ENCODE measurements at regions of chr4 and their contacts with region 1.

Region 1: DNA sequence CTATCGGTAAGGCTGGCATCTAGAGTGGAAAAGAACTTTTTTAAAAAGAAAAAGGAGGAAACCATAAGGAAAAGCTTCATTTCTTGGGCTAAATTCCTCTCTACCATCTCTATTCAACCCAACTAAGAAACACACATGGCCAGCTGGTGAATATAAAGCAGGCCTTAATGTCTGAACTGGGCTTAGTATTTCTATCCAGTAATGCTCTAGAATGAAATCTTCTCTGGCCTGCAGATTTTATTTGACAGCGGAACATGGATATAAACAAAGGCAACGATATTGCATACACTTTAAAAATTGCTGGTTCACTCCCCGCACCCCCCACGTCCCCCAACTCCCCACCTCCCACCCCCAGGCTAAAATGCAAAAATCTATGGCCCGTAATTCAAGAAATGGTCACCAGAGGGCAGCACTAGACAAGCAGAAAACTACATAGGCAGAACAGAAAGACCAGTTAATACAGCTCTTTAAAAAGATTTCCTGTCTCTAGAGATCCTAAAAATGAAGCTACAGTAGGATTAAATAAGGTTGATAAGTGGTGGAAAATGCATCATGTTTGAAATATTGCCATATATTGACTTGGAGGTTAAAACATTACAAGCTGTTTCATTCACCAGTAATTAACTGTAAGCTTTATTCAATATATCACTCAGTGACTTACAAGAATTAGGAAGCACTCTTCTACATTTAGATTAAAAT is 155.2 kb upstream of the GALNT7 start:
- DNase-seq: peak in 1 of 2 experiments; percentile 88
- H3K4me3 ChIP-seq: no peak overlapping the region
- H3K27ac ChIP-seq: no peak overlapping the region
- H3K4me1 ChIP-seq: peaks cover 0 to 3% (median 1%) of the 10 kb centered on the region in 4 experiments; a peak in 4 of 7 replicates
- H3K27me3 ChIP-seq: no peaks in the 10 kb centered on the region
- CTCF ChIP-seq: peak in 2 of 3 experiments; percentile 46 to 69; a peak in 3 of 4 replicates
- EP300 ChIP-seq: no peak
- POLR2A ChIP-seq: no peak
- RAD21 ChIP-seq: peak; percentile 80 to 86

Region 2: DNA sequence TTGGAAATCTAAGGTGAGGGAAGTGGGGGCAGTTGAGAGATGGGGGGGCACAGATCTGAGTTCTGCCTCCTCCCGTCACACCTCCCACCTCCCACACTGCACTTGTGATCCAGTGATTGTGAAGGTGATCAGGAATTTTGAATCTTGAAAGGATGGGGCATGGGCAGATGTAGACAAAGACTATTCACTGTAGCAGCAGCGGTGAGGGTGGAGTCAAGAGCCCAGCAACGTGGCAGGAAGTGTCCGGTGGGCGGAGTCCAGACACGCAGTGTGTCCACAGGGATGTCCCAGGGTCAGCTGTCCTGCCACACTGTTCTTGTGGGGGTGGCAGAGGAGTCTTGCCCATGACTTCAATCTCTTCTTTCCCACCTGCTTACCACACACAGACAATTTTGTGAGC is 175.3 kb before region 1 on chr4:
- CTCF ChIA-PET with region 1: no interaction called
- POLR2A ChIA-PET with region 1: no interaction called
- DNase-seq: no peak
- H3K4me3 ChIP-seq: no peak overlapping the region
- H3K27ac ChIP-seq: no peak overlapping the region
- H3K4me1 ChIP-seq: peaks cover 0 to 3% (median 1%) of the 10 kb centered on the region in 4 experiments; a peak in 1 of 7 replicates
- H3K27me3 ChIP-seq: no peaks in the 10 kb centered on the region
- CTCF ChIP-seq: no peak
- EP300 ChIP-seq: no peak
- POLR2A ChIP-seq: no peak
- RAD21 ChIP-seq: no peak

Region 3: GRCh38 chr4:172992648-172993378 is 20.6 kb before region 1 on chr4:
- CTCF ChIA-PET with region 1: interaction called, 15 read pairs
- POLR2A ChIA-PET with region 1: no interaction called
- DNase-seq: no peak
- H3K4me3 ChIP-seq: no peak overlapping the region
- H3K27ac ChIP-seq: no peak overlapping the region
- H3K4me1 ChIP-seq: no peaks in the 10 kb centered on the region
- H3K27me3 ChIP-seq: no peaks in the 10 kb centered on the region; a peak in 1 of 7 replicates
- CTCF ChIP-seq: no peak
- EP300 ChIP-seq: no peak
- POLR2A ChIP-seq: no peak
- RAD21 ChIP-seq: no peak

Region 4: GRCh38 chr4:173237152-173237551 is 223.8 kb after region 1 on chr4:
- CTCF ChIA-PET with region 1: interaction called, 10 read pairs
- POLR2A ChIA-PET with region 1: no interaction called
- DNase-seq: no peak
- H3K4me3 ChIP-seq: no peak overlapping the region
- H3K27ac ChIP-seq: no peak overlapping the region
- H3K4me1 ChIP-seq: peaks cover 2 to 18% (median 14%) of the 10 kb centered on the region in 4 experiments; a peak in 6 of 7 replicates
- H3K27me3 ChIP-seq: no peaks in the 10 kb centered on the region
- CTCF ChIP-seq: no peak
- EP300 ChIP-seq: no peak
- POLR2A ChIP-seq: no peak
- RAD21 ChIP-seq: no peak

Region 5: DNA sequence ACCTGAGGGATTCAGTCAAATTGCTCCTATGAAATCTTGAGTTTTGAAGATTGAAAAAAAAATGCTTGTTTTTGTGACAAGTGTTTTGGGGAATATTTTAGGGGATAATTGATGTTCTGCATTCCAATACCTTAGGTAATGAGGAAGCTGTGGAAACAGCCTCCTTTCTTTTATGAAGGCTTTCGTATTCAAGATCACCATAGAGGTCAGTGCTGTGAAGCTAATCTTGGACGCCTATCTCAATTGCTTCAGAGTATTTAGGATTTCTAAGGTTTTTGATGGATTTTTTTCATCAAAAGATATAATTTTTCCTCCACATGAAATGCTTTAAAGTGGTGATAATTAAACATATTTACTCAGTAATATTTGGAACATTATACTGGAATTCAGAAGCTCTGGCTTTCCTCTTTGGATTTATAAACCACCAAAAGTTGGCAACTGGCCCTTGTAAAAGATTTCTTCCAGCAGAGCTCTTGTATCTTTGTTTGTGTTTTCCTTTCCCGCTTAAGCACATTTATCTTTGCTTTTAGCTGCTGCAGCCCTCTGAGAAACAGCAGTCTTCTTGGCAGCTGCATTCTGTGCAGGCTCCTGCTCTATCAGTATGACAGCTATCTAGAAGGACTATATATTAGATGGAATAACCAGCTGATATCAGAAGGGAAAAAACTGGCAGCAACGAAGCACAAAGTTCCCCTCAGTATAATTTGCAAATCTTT is 257.1 kb after region 1 on chr4:
- CTCF ChIA-PET with region 1: interaction called, 13 read pairs
- POLR2A ChIA-PET with region 1: no interaction called
- DNase-seq: no peak
- H3K4me3 ChIP-seq: no peak overlapping the region
- H3K27ac ChIP-seq: no peak overlapping the region
- H3K4me1 ChIP-seq: peaks cover 0 to 5% (median 1%) of the 10 kb centered on the region in 4 experiments; a peak in 3 of 7 replicates
- H3K27me3 ChIP-seq: no peaks in the 10 kb centered on the region; a peak in 1 of 7 replicates
- CTCF ChIP-seq: no peak
- EP300 ChIP-seq: no peak
- POLR2A ChIP-seq: no peak
- RAD21 ChIP-seq: no peak

Region 6: GRCh38 chr4:173301518-173302201 is 288.3 kb after region 1 on chr4:
- CTCF ChIA-PET with region 1: interaction called, 31 read pairs
- POLR2A ChIA-PET with region 1: interaction called, 3 read pairs
- DNase-seq: no peak
- H3K4me3 ChIP-seq: no peak overlapping the region
- H3K27ac ChIP-seq: no peak overlapping the region
- H3K4me1 ChIP-seq: no peaks in the 10 kb centered on the region; a peak in 1 of 7 replicates
- H3K27me3 ChIP-seq: no peaks in the 10 kb centered on the region
- CTCF ChIP-seq: peak in 2 of 3 experiments; percentile 32 to 62; a peak in 2 of 4 replicates
- EP300 ChIP-seq: no peak
- POLR2A ChIP-seq: no peak
- RAD21 ChIP-seq: peak; percentile 57 to 60

Region 7: GRCh38 chr4:173370477-173371291 is 357.3 kb after region 1 on chr4 and contains the start of gene SAP30:
- CTCF ChIA-PET with region 1: interaction called, 11 read pairs
- POLR2A ChIA-PET with region 1: no interaction called
- DNase-seq: peak; percentile 90 to 94
- H3K4me3 ChIP-seq: peak within 1 kb of the TSS; percentile 68 to 90 (median 88)
- H3K27ac ChIP-seq: 0 out of 2 replicates have a peak within 1 kb of the TSS, but pooled peaks have one; percentile 30
- H3K4me1 ChIP-seq: no peaks in the 10 kb centered on the region; a peak in 1 of 7 replicates
- H3K27me3 ChIP-seq: no peaks in the 10 kb centered on the region
- CTCF ChIP-seq: no peak
- EP300 ChIP-seq: no peak
- POLR2A ChIP-seq: peak; percentile 66 to 73
- RAD21 ChIP-seq: no peak
- total RNA-seq, gene SAP30: 17.9 and 21.1 TPM in 2 replicates

Measured in H1 (cell line).